HEK293 (cell line): ENCODE measurements at regions of chr12 and their contacts with region 1.

Region 1: DNA sequence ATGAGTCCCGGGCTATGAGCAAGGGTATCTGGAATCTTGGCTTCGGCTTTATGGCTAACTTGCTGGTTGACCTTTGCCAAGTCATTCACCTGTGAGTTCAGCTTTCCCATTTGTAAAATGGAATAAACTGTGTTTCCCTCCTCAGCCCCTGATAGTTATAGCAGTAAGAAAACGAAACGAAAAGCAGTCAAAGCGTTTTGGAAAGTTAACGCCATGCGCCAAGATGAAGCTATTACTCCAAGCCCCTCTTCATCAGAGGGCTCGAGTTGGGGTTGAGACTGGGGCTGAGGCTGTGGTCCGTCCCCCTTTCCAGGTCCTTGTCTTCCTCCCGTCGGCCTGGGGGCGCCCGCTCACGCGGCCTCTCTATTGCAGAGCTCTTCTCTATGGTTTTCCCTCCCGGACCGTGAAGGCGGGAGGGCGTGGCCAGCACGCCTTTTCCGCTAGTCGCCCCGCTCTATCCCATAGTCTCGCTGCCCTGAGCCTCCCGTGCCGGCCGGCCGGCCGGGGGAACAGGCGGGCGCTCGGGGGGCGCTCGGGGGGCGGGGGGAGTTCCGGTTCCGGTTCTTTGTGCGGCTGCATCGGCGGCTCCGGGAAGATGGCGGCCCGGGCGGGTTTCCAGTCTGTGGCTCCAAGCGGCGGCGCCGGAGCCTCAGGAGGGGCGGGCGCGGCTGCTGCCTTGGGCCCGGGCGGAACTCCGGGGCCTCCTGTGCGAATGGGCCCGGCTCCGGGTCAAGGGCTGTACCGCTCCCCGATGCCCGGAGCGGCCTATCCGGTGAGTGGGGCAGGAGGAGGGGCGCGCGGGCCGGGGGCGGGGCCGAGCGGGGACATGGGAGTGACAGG is at the start of gene SMARCD1:
- H3K4me3 ChIP-seq: peak within 1 kb of the TSS; percentile 75
- H3K27ac ChIP-seq: peak within 1 kb of the TSS; percentile 69
- H3K4me1 ChIP-seq: no peaks in the 10 kb centered on the region
- CTCF ChIP-seq: peak; percentile 65

Region 2: GRCh38 chr12:50097952-50098351 is 13.0 kb after region 1 on chr12:
- CTCF ChIA-PET with region 1: interaction called, 24 read pairs
- POLR2A ChIA-PET with region 1: interaction called, 5 read pairs
- H3K4me3 ChIP-seq: no peak overlapping the region
- H3K27ac ChIP-seq: no peak overlapping the region
- H3K4me1 ChIP-seq: no peaks in the 10 kb centered on the region
- CTCF ChIP-seq: no peak

Region 3: DNA sequence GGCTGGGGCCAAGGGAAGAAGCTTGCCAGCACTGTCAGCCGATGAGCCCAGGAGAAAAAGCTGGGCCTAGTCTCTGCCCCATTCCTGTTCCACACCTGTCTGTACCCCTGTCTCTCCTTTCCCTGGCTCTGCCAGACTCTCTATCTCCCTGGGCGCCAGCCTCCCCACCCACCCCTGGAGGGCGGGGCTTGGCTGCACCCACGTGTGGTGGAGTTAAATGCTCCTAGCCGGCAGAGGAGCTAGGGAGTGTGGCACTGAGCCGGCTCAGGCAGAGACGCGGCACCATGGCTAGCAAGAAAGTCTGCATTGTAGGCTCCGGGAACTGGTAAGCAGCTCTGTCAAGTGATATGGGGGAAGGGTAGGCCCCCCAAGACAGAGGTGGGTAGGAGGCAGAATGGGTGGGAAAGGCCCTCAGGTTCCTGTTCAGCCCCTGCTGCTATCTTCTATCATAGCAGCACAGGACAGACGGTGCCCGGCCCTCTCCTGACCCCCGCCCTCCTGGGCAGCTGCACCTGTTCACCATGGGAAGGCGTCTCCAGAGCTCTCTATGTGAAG is 18.8 kb after region 1 on chr12 and contains the start of gene GPD1:
- CTCF ChIA-PET with region 1: interaction called, 53 read pairs
- POLR2A ChIA-PET with region 1: interaction called, 68 read pairs
- H3K4me3 ChIP-seq: no peak within 1 kb of the TSS
- H3K27ac ChIP-seq: no peak within 1 kb of the TSS; the same call in 1 of the 2 replicates
- H3K4me1 ChIP-seq: peaks cover 7% of the 10 kb centered on the region
- CTCF ChIP-seq: no peak

Region 4: DNA sequence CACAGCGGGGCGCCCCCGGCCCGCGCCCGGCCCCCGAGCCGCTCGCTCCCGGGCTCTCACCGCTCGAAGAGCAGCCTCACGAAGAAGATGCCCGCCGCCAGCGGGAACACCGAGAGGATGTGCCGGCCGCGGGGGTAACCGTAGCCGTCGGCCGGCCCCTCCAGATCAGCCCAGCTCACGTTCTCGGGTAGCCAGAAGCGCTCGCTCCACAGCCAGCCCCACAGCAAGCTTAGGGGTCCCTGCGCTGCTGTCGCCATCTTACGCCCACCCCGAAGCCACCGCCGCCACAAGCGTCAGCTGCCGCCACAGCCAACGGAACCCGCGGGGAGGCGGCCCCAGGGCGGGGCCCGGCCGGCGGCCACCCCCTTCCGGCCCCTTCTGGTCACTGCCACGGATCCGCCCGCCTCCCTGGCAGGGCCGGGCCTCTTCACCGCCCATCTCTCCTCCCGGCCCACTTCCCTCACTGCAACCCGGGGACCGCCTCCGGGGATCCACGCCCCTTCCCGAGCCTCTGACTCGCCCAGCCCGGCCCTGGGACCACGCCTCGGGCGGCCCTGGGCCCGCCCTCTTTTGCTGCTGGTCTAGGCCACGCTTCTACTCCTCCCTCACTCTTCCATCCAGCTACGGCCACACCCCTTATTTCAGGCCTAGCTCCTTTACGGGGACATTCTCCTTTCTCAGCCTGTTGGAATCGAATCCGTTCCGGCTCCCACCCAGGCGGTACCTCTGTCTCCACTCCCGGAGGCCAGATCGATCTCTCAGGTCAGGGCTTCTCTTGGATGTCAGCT is 82.2 kb after region 1 on chr12 and contains the start of gene CERS5:
- CTCF ChIA-PET with region 1: interaction called, 9 read pairs
- POLR2A ChIA-PET with region 1: interaction called, 33 read pairs
- H3K4me3 ChIP-seq: peak within 1 kb of the TSS; percentile 96
- H3K27ac ChIP-seq: peak within 1 kb of the TSS; percentile 84
- H3K4me1 ChIP-seq: peaks cover 3% of the 10 kb centered on the region; the same call in 1 of the 2 replicates
- CTCF ChIP-seq: peak; percentile 36